Motor neuron (in vitro differentiated cells): ENCODE measurements at regions of chr1 and their contacts with region 1.

Region 1: GRCh38 chr1:46477153-46477929 is 12.3 kb upstream of the DMBX1 start:
- ATAC-seq: peak; percentile 65 to 95 (median 75)
- H3K4me3 ChIP-seq: no peak overlapping the region
- H3K27ac ChIP-seq: no peak overlapping the region
- H3K4me1 ChIP-seq: no peaks in the 10 kb centered on the region

Region 2: DNA sequence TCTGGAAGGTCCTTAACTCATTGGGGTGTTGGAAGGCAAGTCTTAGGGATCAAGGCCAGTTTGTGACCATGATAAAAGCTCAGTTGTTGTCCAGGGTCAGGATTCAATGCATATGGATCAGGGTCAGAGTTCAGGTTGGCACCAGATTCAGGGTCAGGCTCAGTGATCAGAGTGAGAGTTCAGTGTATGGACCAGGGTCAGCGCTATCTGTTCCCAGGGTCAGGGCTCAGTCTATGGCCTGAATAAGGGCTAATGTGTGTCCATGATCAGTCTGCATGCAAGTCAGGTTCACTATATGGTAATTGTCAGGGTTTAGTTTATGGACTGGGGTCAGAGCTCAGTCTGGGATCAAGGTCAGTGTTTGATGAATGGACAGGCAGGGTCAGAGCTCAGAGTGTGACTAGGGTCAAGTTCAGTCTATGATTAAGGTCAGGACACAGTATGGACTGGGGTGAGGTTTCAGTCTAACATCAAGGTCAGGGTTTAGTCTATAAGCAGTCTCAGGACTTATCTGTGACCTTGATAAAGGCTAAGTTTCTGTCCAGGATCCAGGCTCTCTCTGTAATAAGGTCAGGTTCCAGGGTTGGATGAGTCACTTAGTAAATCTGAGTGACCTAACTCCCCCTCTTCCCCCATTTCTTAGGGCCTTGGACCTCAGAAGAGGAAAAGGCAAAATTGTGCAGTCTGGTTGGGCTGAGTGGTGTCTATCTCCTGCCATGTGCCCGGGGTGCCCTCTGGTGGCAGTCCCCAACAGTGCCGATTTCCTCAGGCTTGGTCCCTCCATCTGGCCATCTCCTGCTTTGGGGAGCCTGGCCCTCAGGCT is 50.3 kb after region 1 on chr1:
- in situ Hi-C with region 1: loop called in 1 of 9 experiments (anchors 10 kb)
- ATAC-seq: peak; percentile 51 to 88 (median 69)
- H3K4me3 ChIP-seq: no peak overlapping the region
- H3K27ac ChIP-seq: no peak overlapping the region
- H3K4me1 ChIP-seq: peaks cover 5 to 7% of the 10 kb centered on the region in 2 donors

Region 3: DNA sequence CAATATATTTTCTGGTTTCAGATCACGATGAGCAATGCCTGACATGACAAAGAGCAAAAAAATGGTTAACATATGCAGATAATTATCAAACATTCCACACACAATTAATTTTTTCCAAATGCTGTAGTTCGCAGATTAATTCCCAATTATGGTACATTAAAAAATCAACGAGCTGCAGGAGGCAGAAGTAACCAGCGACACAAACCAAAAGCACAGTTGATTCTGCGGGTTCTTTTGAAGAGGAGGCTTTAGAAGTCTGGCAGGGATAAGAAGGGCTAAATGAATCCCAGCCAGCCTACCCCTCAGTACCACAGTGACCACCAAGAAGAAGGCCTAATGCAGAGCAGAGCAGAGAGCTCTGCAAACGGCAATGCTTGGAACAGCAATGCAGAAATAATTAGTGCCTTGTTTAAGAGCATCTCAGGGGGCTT is 91.1 kb after region 1 on chr1:
- in situ Hi-C with region 1: no loop called
- ATAC-seq: no peak
- H3K4me3 ChIP-seq: no peak overlapping the region
- H3K27ac ChIP-seq: no peak overlapping the region
- H3K4me1 ChIP-seq: peaks cover 0 to 13% of the 10 kb centered on the region in 2 donors